ENCODE measurements at regions of chr18 and their contacts with region 1.

Region 1: GRCh38 chr18:31490387-31490786 is 7.6 kb upstream of the DSG2 start:
- DNase-seq: no peak
- ATAC-seq: no peak
- H3K4me3 ChIP-seq: no peak overlapping the region
- H3K4me3 Mint-ChIP-seq: no peak overlapping the region
- H3K27ac ChIP-seq: no peak overlapping the region
- H3K27ac Mint-ChIP-seq: no peak overlapping the region
- H3K4me1 ChIP-seq: no peaks in the 10 kb centered on the region
- H3K4me1 Mint-ChIP-seq: no peaks in the 10 kb centered on the region
- H3K27me3 ChIP-seq: no peaks in the 10 kb centered on the region
- H3K27me3 Mint-ChIP-seq: peaks cover 0 to 26% of the 10 kb centered on the region in 2 donors

Region 2: DNA sequence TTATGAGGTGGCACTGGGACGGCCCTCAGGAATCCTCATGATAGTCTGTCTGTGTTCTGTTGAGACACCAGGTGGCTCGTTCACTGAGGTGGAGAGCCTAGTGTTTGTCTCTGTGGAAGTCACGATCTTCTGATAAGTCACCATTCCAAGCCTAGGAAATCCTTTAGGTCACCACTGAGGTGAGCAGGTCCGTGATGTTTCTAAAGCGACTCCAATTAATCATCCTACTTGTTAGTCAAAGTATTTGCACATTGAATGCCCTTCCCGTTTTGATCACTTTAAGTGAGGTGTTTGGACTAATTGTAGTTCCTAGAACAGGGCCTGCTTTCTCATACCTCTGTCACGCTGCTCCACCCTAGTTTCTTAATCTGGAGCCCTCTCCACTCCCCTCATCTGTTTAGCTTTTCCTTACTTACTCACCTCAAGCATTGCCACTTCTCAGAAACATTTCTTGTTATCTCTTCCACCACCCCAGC is 70.9 kb before region 1 on chr18:
- CTCF ChIA-PET with region 1: no interaction called
- POLR2A ChIA-PET with region 1: no interaction called
- DNase-seq: no peak
- ATAC-seq: no peak
- H3K4me3 ChIP-seq: no peak overlapping the region
- H3K4me3 Mint-ChIP-seq: no peak overlapping the region
- H3K27ac ChIP-seq: no peak overlapping the region
- H3K27ac Mint-ChIP-seq: no peak overlapping the region
- H3K4me1 ChIP-seq: no peaks in the 10 kb centered on the region
- H3K4me1 Mint-ChIP-seq: no peaks in the 10 kb centered on the region
- H3K27me3 ChIP-seq: no peaks in the 10 kb centered on the region
- H3K27me3 Mint-ChIP-seq: no peaks in the 10 kb centered on the region

Region 3: GRCh38 chr18:31429621-31430020 is 60.8 kb before region 1 on chr18:
- CTCF ChIA-PET with region 1: no interaction called
- POLR2A ChIA-PET with region 1: interaction called in 1 of 2 experiments, 12 read pairs
- DNase-seq: no peak
- ATAC-seq: no peak
- H3K4me3 ChIP-seq: no peak overlapping the region
- H3K4me3 Mint-ChIP-seq: no peak overlapping the region
- H3K27ac ChIP-seq: no peak overlapping the region
- H3K27ac Mint-ChIP-seq: no peak overlapping the region
- H3K4me1 ChIP-seq: no peaks in the 10 kb centered on the region
- H3K4me1 Mint-ChIP-seq: no peaks in the 10 kb centered on the region
- H3K27me3 ChIP-seq: no peaks in the 10 kb centered on the region
- H3K27me3 Mint-ChIP-seq: peaks cover 0 to 5% of the 10 kb centered on the region in 2 donors

Measured in T-cell (primary cell).